Naive thymus-derived CD4-positive, alpha-beta T cell (primary cell): ENCODE measurements at regions of chr22 and their contacts with region 1.

Region 1: DNA sequence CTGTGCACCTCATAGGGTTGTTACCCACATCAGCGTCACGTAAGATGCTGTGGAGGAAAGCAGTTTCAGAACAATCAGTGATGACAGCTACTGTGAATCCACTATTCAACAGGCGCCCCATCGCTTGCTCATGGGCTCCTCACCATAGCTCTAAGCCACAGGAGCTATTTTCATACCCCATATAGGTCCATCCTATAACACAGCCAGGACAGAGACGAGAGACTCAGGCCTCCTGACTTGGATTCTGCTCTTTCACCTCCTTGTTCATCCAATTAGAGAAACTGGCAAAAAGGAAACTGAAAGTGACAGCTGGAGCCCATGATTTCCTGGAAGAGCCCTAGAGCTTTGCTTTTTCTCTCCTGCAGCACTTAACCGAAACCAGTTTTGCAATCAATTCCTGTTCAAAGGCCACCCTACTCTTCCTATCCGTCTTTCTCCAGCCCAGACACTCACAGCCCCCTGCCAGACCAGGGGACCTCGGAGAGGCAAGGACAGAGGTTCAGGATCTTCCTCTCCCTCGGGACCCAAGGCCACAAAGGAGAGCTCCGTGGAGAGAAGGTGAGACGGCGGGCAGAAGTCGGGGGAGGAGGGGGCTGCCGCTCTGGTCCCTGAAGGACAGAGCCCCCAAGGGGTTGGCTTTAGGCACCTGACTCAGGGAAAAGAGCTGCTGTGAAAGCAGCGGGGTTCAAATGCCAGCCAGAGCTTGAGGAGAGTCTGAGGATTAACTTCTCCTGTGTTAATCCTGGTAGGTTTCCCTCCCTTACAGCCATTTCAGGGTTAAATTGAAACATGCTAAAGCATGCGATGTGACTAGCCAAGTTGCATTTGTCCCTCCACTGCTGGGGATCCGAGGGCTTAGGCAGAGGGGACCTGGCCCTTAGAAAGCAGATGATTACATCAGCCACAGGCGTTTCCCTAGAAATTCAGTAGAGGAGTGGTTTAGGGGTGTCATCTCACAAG is at the start of gene APOL6:
- DNase-seq: peak; percentile 31 to 81 (median 79)
- ATAC-seq: peak; percentile 80
- H3K4me3 ChIP-seq: peak within 1 kb of the TSS; percentile 93
- H3K4me3 Mint-ChIP-seq: peak within 1 kb of the TSS; percentile 95 to 100 (median 100)
- H3K27ac ChIP-seq: peak within 1 kb of the TSS; percentile 96
- H3K27ac Mint-ChIP-seq: peak within 1 kb of the TSS; percentile 97 to 100 (median 100)
- H3K4me1 ChIP-seq: peaks cover 27% of the 10 kb centered on the region in 2 donors
- H3K4me1 Mint-ChIP-seq: peaks cover 17 to 54% (median 41%) of the 10 kb centered on the region in 7 donors
- H3K27me3 ChIP-seq: no peaks in the 10 kb centered on the region
- H3K27me3 Mint-ChIP-seq: no peaks in the 10 kb centered on the region
- total RNA-seq, gene APOL6: 33.4 to 99.8 (median 38.2) TPM

Region 2: DNA sequence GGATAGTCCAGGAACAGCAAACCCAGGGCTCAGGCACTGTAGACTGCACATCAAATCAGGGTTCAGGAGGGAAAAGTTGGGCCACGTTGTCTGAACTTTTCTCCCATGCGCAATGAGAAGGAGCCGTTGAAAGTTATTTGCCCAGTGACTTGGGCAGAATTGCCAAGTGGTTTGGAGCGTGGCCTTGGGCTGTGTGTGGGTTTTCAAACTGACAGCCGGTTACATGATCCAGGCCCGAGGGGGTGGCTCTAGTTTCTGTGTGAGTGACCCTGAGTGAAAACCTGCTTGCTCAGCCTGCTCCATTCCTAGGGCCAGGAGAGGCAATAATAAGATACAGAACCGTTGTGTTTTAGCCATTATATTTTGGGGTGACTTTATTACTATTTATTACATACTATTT is 51.5 kb before region 1 on chr22:
- CTCF ChIA-PET with region 1: no interaction called
- POLR2A ChIA-PET with region 1: no interaction called
- intact Hi-C with region 1: no loop called
- DNase-seq: no peak
- ATAC-seq: no peak
- H3K4me3 ChIP-seq: no peak overlapping the region
- H3K4me3 Mint-ChIP-seq: no peak overlapping the region
- H3K27ac ChIP-seq: no peak overlapping the region
- H3K27ac Mint-ChIP-seq: no peak overlapping the region
- H3K4me1 ChIP-seq: no peaks in the 10 kb centered on the region
- H3K4me1 Mint-ChIP-seq: peaks cover 0 to 2% (median 0%) of the 10 kb centered on the region in 7 donors
- H3K27me3 ChIP-seq: no peaks in the 10 kb centered on the region
- H3K27me3 Mint-ChIP-seq: peaks cover 0 to 14% (median 0%) of the 10 kb centered on the region in 5 donors

Region 3: GRCh38 chr22:35660291-35661127 is 12.2 kb after region 1 on chr22:
- CTCF ChIA-PET with region 1: interaction called, 3 read pairs
- POLR2A ChIA-PET with region 1: interaction called, 96 read pairs
- intact Hi-C with region 1: loop called (anchors 1 kb)
- DNase-seq: peak in 8 of 9 donors; percentile 20 to 82 (median 77)
- ATAC-seq: peak; percentile 93
- H3K4me3 ChIP-seq: peak overlapping the region; percentile 5
- H3K4me3 Mint-ChIP-seq: peak overlapping the region; percentile 38 to 81 (median 68)
- H3K27ac ChIP-seq: peak overlapping the region; percentile 85
- H3K27ac Mint-ChIP-seq: peak overlapping the region; percentile 81 to 98 (median 95)
- H3K4me1 ChIP-seq: peaks cover 44 to 58% of the 10 kb centered on the region in 2 donors
- H3K4me1 Mint-ChIP-seq: peaks cover 45 to 80% (median 72%) of the 10 kb centered on the region in 7 donors
- H3K27me3 ChIP-seq: no peaks in the 10 kb centered on the region
- H3K27me3 Mint-ChIP-seq: no peaks in the 10 kb centered on the region

Region 4: GRCh38 chr22:35690001-35690400 is 41.7 kb after region 1 on chr22:
- CTCF ChIA-PET with region 1: no interaction called
- POLR2A ChIA-PET with region 1: interaction called, 6 read pairs
- intact Hi-C with region 1: loop called in 1 of 2 experiments (anchors 2 kb)
- DNase-seq: no peak
- ATAC-seq: no peak
- H3K4me3 ChIP-seq: no peak overlapping the region
- H3K4me3 Mint-ChIP-seq: no peak overlapping the region
- H3K27ac ChIP-seq: no peak overlapping the region
- H3K27ac Mint-ChIP-seq: peak overlapping the region in 1 of 9 donors; percentile 12
- H3K4me1 ChIP-seq: no peaks in the 10 kb centered on the region
- H3K4me1 Mint-ChIP-seq: peaks cover 0 to 7% (median 0%) of the 10 kb centered on the region in 7 donors
- H3K27me3 ChIP-seq: no peaks in the 10 kb centered on the region
- H3K27me3 Mint-ChIP-seq: peaks cover 0 to 2% (median 0%) of the 10 kb centered on the region in 5 donors

Region 5: DNA sequence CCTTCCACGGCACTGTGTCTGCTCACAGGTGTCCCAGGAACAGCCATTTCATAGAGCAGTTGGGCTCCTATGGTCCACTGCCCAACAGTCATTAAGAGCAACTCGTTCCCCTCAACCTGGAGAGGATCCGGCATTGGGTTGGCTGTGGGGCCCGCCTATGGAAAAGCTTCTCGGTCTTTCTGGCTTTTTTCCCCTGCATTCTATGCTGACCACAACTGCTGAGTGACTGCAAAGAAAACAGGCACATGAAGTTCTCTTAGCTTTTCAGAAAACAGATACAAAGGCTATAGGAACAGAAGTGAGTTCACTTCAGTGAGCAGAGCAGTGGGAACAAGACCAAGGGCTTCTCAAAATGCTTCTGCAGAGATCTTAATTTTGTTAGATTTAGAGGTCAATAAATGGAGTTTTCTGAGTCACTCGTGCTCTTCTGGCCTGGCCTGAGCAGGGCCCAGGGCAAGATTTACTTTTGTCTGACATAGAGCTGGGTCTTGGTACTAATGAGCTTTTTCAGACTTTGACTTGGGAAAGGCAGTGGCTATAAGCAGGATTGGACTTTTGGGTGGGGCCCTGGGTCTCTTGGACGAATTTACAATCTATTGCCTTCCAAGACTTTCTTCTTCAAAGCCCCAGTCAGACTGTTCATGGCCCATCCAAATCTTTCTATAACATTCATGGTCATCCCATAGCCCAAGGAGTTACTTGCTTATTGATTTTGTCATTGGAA is 55.7 kb after region 1 on chr22:
- CTCF ChIA-PET with region 1: no interaction called
- POLR2A ChIA-PET with region 1: interaction called, 3 read pairs
- intact Hi-C with region 1: loop called in 1 of 2 experiments (anchors 5 kb)
- DNase-seq: no peak
- ATAC-seq: no peak
- H3K4me3 ChIP-seq: no peak overlapping the region
- H3K4me3 Mint-ChIP-seq: no peak overlapping the region
- H3K27ac ChIP-seq: no peak overlapping the region
- H3K27ac Mint-ChIP-seq: no peak overlapping the region
- H3K4me1 ChIP-seq: no peaks in the 10 kb centered on the region
- H3K4me1 Mint-ChIP-seq: no peaks in the 10 kb centered on the region
- H3K27me3 ChIP-seq: no peaks in the 10 kb centered on the region
- H3K27me3 Mint-ChIP-seq: no peaks in the 10 kb centered on the region

Region 6: GRCh38 chr22:35728639-35729308 is 80.4 kb after region 1 on chr22:
- CTCF ChIA-PET with region 1: no interaction called
- POLR2A ChIA-PET with region 1: no interaction called
- intact Hi-C with region 1: no loop called
- DNase-seq: no peak
- ATAC-seq: no peak
- H3K4me3 ChIP-seq: no peak overlapping the region
- H3K4me3 Mint-ChIP-seq: no peak overlapping the region
- H3K27ac ChIP-seq: no peak overlapping the region
- H3K27ac Mint-ChIP-seq: no peak overlapping the region
- H3K4me1 ChIP-seq: no peaks in the 10 kb centered on the region
- H3K4me1 Mint-ChIP-seq: peaks cover 0 to 2% (median 0%) of the 10 kb centered on the region in 7 donors
- H3K27me3 ChIP-seq: no peaks in the 10 kb centered on the region
- H3K27me3 Mint-ChIP-seq: peaks cover 0 to 17% (median 0%) of the 10 kb centered on the region in 5 donors